Caco-2 (cell line): ENCODE measurements at regions of chr22 and their contacts with region 1.

Region 1: GRCh38 chr22:22060200-22061084 is 77.9 kb upstream of the TOP3B start:
- DNase-seq: peak; percentile 56 to 71
- H3K4me3 ChIP-seq: no peak overlapping the region
- H3K4me3 Mint-ChIP-seq: no peak overlapping the region
- H3K27ac Mint-ChIP-seq: peak overlapping the region; percentile 80
- H3K4me1 ChIP-seq: peaks cover 42% of the 10 kb centered on the region
- H3K4me1 Mint-ChIP-seq: peaks cover 17% of the 10 kb centered on the region
- H3K27me3 ChIP-seq: no peaks in the 10 kb centered on the region
- H3K27me3 Mint-ChIP-seq: no peaks in the 10 kb centered on the region
- CTCF ChIP-seq: peak; percentile 46 to 54

Region 2: DNA sequence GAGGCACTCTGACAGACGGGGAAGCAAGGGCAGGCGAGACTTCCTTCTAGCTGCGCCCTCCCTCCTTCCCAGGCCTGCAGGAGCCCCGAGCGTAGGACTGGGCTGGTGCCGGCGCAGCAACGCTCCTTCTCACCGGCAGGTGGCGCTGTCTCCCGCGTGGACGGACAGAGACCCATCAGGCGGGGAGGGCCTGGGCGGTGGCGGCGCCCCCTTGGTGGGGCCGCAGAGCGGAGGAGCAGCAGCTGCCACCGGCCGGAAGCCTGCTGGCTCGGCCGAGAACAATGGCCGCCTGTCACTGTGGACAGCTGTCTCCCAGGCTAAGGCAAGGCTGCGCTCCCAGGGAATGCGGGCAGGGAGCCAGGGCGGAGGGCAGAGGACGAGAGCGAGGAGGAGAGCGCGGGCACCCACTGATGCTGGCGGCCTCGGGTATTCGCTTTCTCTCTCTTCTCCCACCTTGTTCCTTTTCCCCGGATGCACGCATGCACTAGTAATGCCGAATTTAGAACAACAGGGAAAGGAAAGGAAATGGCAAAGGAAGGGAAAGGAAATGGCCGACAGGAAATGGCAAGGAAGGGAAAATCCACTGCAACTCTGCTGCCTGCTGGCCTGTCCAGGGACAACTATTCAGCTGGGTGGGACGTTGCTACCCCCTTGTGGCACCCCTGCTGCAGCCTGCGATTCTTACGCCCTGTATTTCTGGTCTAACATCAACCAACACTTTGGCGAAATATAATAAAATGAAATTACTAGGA is 122.2 kb before region 1 on chr22:
- CTCF ChIA-PET with region 1: no interaction called
- POLR2A ChIA-PET with region 1: no interaction called
- intact Hi-C with region 1: no loop called
- DNase-seq: peak; percentile 86 to 93
- H3K4me3 ChIP-seq: peak overlapping the region; percentile 90
- H3K4me3 Mint-ChIP-seq: peak overlapping the region; percentile 97
- H3K27ac Mint-ChIP-seq: peak overlapping the region; percentile 88
- H3K4me1 ChIP-seq: 0 out of 2 replicates have a peak, but pooled peaks cover 3% of the 10 kb centered on the region
- H3K4me1 Mint-ChIP-seq: peaks cover 9% of the 10 kb centered on the region
- H3K27me3 ChIP-seq: no peaks in the 10 kb centered on the region
- H3K27me3 Mint-ChIP-seq: no peaks in the 10 kb centered on the region
- CTCF ChIP-seq: peak; percentile 88 to 98

Region 3: DNA sequence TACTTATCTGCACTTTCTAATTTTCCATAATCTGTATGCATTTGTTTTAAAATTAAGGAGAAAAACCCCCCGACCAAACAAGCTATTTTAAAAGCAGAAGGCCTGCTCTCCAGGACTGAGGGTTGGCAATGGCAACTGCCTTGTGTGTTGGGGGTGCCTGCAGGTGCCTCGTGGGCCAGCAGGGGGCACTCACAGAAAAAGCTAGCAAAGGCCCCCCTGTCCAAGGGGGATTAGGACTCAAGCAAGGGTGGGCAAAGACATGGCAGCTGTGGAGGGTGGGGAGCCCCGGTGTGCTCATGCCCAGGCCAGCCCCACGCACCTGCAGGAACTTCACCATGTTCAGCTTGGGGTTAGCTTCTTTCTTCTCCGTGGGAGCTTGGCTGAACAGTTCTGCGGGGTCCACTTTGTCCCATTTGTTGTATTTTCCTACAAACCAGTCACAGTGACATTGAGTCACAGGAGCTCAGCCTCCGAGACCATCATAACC is 88.1 kb before region 1 on chr22:
- CTCF ChIA-PET with region 1: interaction called, 11 read pairs
- POLR2A ChIA-PET with region 1: no interaction called
- intact Hi-C with region 1: no loop called
- DNase-seq: peak in 1 of 2 experiments; percentile 57
- H3K4me3 ChIP-seq: no peak overlapping the region
- H3K4me3 Mint-ChIP-seq: no peak overlapping the region
- H3K27ac Mint-ChIP-seq: no peak overlapping the region
- H3K4me1 ChIP-seq: no peaks in the 10 kb centered on the region
- H3K4me1 Mint-ChIP-seq: no peaks in the 10 kb centered on the region
- H3K27me3 ChIP-seq: no peaks in the 10 kb centered on the region
- H3K27me3 Mint-ChIP-seq: no peaks in the 10 kb centered on the region
- CTCF ChIP-seq: peak; percentile 82 to 90

Region 4: DNA sequence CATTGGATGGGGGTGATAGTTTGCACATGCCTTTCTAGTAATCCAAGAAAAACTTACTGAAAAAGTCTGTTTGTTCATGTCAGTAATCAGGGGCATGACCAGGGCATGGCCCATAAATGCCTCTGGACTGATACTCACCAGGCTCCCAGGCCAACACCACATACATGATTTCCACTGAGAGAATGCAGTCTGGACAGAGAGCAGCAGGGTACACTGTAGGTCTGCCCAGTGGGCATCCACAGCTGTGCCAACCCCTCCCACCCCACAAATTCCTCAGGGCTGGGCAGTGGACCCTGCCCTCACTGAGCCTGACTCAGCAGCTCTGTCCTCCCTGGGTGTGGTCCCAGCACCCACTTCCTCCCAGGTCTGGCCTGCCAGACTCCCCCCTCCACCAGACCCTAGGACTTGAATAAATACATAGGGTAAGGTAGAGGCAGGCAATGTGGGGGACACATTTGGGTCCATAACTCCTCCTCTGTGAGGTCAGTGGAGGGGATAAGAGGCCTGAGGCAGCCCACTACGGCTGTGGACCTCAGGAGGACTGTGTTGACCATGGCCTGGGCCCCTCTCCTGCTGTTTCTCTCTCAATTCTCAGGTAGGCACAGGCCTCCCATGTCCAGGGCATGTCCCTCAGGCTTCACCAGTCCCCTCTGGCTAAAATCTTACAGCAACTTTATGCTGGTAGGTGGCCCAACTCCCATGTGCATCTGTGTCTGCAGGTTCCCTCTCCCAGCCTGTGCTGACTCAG is 14.4 kb after region 1 on chr22:
- CTCF ChIA-PET with region 1: no interaction called
- POLR2A ChIA-PET with region 1: no interaction called
- intact Hi-C with region 1: no loop called
- DNase-seq: no peak
- H3K4me3 ChIP-seq: no peak overlapping the region
- H3K4me3 Mint-ChIP-seq: no peak overlapping the region
- H3K27ac Mint-ChIP-seq: peak overlapping the region; percentile 69
- H3K4me1 ChIP-seq: peaks cover 13% of the 10 kb centered on the region
- H3K4me1 Mint-ChIP-seq: peaks cover 18% of the 10 kb centered on the region
- H3K27me3 ChIP-seq: no peaks in the 10 kb centered on the region
- H3K27me3 Mint-ChIP-seq: no peaks in the 10 kb centered on the region
- CTCF ChIP-seq: no peak